B cell (primary cell): ENCODE measurements at regions of chr16 and their contacts with region 1.

Region 1: DNA sequence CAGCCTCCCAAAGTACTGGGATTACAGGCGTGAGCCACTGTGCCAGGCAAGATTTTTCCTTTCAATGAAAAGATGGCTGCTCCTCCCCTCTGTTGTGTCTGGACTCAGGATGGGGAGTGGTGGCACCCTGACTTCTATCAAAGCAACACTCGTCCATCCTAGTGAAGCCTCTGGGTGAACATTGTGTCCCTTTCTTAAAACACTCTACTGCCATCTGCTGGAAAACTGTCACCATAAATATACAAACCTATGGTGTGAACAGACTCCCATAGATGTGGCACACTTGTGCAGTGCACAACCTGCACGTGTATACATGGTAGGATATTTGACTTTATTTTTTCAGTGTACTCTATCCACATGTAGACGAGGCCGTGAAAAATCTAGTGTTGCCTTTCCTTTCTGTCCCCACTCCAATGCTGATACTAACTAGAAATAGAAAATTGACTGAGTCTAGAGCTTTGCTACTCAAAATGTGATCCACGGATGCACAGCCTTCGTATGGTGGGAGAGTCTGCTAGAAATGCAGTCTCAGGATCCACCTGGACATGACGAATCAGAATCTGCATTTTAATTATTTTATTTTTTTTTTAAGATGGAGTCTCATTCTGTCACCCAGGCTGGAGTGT is 55.9 kb upstream of the PLCG2 start:
- DNase-seq: peak; percentile 84
- ATAC-seq: peak; percentile 87
- H3K4me3 ChIP-seq: no peak overlapping the region
- H3K4me3 Mint-ChIP-seq: no peak overlapping the region
- H3K27ac ChIP-seq: no peak overlapping the region
- H3K27ac Mint-ChIP-seq: peak overlapping the region; percentile 57
- H3K4me1 ChIP-seq: peaks cover 7 to 24% of the 10 kb centered on the region in 2 donors
- H3K4me1 Mint-ChIP-seq: peaks cover 11% of the 10 kb centered on the region
- H3K27me3 ChIP-seq: no peaks in the 10 kb centered on the region
- H3K27me3 Mint-ChIP-seq: no peaks in the 10 kb centered on the region
- CTCF ChIP-seq: peak; percentile 88

Region 2: DNA sequence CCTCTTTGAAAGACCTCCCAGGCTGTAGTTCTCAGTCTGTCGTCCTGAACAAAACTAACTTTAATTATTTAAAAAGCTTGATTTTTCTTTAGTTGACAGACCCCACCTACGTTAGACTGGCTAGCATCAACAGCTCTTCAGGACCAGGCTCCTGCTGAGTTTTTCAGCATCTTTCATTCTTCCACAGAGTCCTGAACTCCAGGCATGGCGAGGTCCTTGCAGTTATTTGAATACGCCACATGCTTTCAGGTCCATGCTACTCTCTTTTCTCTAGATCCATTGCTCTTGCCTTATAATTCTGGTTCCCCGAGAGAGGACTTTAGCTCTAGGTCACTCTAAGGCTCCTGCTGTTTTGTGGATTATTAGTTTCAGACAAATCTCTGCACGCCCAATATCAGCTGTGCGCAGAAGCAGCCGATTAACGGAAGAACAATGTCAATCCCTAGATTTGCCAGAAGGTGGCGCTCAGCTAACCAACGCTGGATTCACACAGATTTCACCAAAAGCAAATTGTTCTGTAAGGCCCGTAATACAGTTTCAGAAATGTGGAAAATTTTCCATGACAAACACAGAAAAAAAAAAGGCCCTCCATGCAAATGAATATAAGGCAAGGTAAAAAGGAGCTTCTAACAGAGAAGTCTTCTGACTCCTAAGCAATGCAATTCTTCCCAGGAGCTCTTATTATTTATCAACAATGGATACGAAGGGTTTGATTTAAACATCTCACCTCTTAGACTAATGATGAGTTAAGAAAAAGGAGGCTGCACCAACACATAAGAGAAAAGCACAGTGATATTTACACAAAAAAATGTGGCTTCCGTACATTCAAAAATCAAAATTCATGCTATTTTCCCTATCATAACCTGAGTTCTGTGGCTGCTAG is 518.2 kb before region 1 on chr16:
- CTCF ChIA-PET with region 1: no interaction called
- POLR2A ChIA-PET with region 1: no interaction called
- intact Hi-C with region 1: loop called (anchors 2 kb)
- DNase-seq: peak; percentile 59
- ATAC-seq: no peak
- H3K4me3 ChIP-seq: no peak overlapping the region
- H3K4me3 Mint-ChIP-seq: no peak overlapping the region
- H3K27ac ChIP-seq: no peak overlapping the region
- H3K27ac Mint-ChIP-seq: no peak overlapping the region
- H3K4me1 ChIP-seq: no peaks in the 10 kb centered on the region
- H3K4me1 Mint-ChIP-seq: no peaks in the 10 kb centered on the region
- H3K27me3 ChIP-seq: peaks cover 0 to 2% (median 0%) of the 10 kb centered on the region in 4 experiments
- H3K27me3 Mint-ChIP-seq: peaks cover 19% of the 10 kb centered on the region
- CTCF ChIP-seq: peak; percentile 72

Region 3: DNA sequence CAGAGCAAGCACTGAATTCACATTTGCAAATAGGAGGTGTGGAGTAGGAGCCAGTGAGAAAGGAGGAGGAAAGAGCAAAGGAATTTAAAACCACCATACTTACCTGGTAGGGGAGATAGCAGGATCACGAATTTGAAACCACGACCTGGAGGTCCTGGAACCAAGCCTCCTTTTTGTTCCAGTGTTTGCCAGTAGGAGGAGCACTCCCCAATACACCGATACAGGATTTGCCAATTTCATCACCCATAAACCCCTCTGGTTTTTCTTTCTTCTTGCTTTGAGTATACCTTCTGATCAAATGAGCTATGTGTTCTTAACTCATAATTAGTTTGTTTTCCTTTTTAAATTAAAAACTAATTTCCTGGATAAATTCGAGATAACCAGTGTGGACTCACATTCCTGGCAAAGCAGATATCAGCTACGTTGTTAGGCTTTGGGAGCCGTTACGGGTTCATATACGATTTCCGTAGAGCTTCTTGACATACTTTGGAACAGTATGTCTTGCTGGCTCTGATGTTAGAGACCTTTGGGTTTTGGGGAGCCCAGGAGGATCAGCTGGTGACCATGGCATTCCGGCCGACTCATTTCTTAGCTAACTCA is 462.1 kb before region 1 on chr16:
- CTCF ChIA-PET with region 1: interaction called, 3 read pairs
- POLR2A ChIA-PET with region 1: no interaction called
- intact Hi-C with region 1: loop called (anchors 2 kb)
- DNase-seq: peak; percentile 23
- ATAC-seq: no peak
- H3K4me3 ChIP-seq: no peak overlapping the region
- H3K4me3 Mint-ChIP-seq: no peak overlapping the region
- H3K27ac ChIP-seq: no peak overlapping the region
- H3K27ac Mint-ChIP-seq: no peak overlapping the region
- H3K4me1 ChIP-seq: no peaks in the 10 kb centered on the region
- H3K4me1 Mint-ChIP-seq: no peaks in the 10 kb centered on the region
- H3K27me3 ChIP-seq: peaks cover 0 to 3% (median 0%) of the 10 kb centered on the region in 4 experiments
- H3K27me3 Mint-ChIP-seq: no peaks in the 10 kb centered on the region
- CTCF ChIP-seq: peak; percentile 68

Region 4: GRCh38 chr16:81366316-81366932 is 356.8 kb before region 1 on chr16:
- CTCF ChIA-PET with region 1: interaction called, 84 read pairs
- POLR2A ChIA-PET with region 1: no interaction called
- intact Hi-C with region 1: loop called (anchors 1 kb)
- DNase-seq: peak; percentile 73
- ATAC-seq: peak; percentile 85
- H3K4me3 ChIP-seq: no peak overlapping the region
- H3K4me3 Mint-ChIP-seq: no peak overlapping the region
- H3K27ac ChIP-seq: no peak overlapping the region
- H3K27ac Mint-ChIP-seq: no peak overlapping the region
- H3K4me1 ChIP-seq: no peaks in the 10 kb centered on the region
- H3K4me1 Mint-ChIP-seq: no peaks in the 10 kb centered on the region
- H3K27me3 ChIP-seq: no peaks in the 10 kb centered on the region
- H3K27me3 Mint-ChIP-seq: no peaks in the 10 kb centered on the region
- CTCF ChIP-seq: peak; percentile 92

Region 5: DNA sequence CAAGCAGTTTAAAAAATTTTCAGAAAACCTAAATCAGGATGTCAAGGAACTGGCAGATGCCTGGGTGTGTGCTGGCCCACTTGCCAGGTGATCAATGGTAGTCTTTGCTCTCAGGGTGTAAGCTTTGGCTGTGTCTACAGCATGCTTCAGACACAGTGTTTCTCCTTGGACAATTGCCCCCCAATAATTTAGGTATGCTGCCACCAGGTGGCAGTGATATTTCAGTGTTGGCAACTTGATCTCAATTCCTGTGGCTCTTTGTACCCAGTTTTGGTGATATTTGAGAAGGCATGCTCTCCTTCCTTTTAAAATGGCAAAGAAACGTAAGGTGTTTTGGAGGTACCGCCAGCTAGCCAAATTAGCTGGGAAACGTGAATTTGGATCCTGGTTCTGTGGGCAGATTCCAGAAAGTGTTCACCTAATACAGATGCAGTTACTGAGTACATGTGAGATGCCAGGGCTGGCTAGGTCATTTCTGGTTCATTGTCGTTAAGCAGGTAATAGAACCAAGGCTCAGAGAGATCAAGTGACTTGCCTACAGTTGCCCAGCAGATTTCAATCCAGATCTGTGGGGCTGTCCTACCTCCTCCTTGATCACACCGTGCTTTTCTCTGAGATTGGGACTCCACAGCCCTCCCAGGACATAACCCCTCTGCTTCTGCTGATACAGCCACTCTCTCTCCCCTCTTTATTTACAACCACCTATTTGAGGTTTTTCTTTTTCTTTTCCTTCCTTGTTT is 99.7 kb before region 1 on chr16:
- CTCF ChIA-PET with region 1: interaction called, 18 read pairs
- POLR2A ChIA-PET with region 1: no interaction called
- intact Hi-C with region 1: loop called (anchors 1 kb)
- DNase-seq: peak; percentile 70
- ATAC-seq: peak; percentile 34
- H3K4me3 ChIP-seq: no peak overlapping the region
- H3K4me3 Mint-ChIP-seq: no peak overlapping the region
- H3K27ac ChIP-seq: no peak overlapping the region
- H3K27ac Mint-ChIP-seq: no peak overlapping the region
- H3K4me1 ChIP-seq: peaks cover 5 to 11% of the 10 kb centered on the region in 2 donors
- H3K4me1 Mint-ChIP-seq: peaks cover 16% of the 10 kb centered on the region
- H3K27me3 ChIP-seq: no peaks in the 10 kb centered on the region
- H3K27me3 Mint-ChIP-seq: no peaks in the 10 kb centered on the region
- CTCF ChIP-seq: peak; percentile 65

Region 6: GRCh38 chr16:81634380-81635062 is 88.7 kb before region 1 on chr16:
- CTCF ChIA-PET with region 1: no interaction called
- POLR2A ChIA-PET with region 1: no interaction called
- intact Hi-C with region 1: no loop called
- DNase-seq: no peak
- ATAC-seq: no peak
- H3K4me3 ChIP-seq: no peak overlapping the region
- H3K4me3 Mint-ChIP-seq: no peak overlapping the region
- H3K27ac ChIP-seq: no peak overlapping the region
- H3K27ac Mint-ChIP-seq: no peak overlapping the region
- H3K4me1 ChIP-seq: no peaks in the 10 kb centered on the region
- H3K4me1 Mint-ChIP-seq: peaks cover 38% of the 10 kb centered on the region
- H3K27me3 ChIP-seq: no peaks in the 10 kb centered on the region
- H3K27me3 Mint-ChIP-seq: no peaks in the 10 kb centered on the region
- CTCF ChIP-seq: no peak

Region 7: GRCh38 chr16:81686391-81687130 is 36.6 kb before region 1 on chr16:
- CTCF ChIA-PET with region 1: no interaction called
- POLR2A ChIA-PET with region 1: no interaction called
- intact Hi-C with region 1: no loop called
- DNase-seq: no peak
- ATAC-seq: no peak
- H3K4me3 ChIP-seq: no peak overlapping the region
- H3K4me3 Mint-ChIP-seq: no peak overlapping the region
- H3K27ac ChIP-seq: no peak overlapping the region
- H3K27ac Mint-ChIP-seq: no peak overlapping the region
- H3K4me1 ChIP-seq: no peaks in the 10 kb centered on the region
- H3K4me1 Mint-ChIP-seq: peaks cover 2% of the 10 kb centered on the region
- H3K27me3 ChIP-seq: no peaks in the 10 kb centered on the region
- H3K27me3 Mint-ChIP-seq: no peaks in the 10 kb centered on the region
- CTCF ChIP-seq: no peak